Lower leg skin (tissue), 4 donors: ENCODE measurements at regions of chr7 and their contacts with region 1.

Region 1: DNA sequence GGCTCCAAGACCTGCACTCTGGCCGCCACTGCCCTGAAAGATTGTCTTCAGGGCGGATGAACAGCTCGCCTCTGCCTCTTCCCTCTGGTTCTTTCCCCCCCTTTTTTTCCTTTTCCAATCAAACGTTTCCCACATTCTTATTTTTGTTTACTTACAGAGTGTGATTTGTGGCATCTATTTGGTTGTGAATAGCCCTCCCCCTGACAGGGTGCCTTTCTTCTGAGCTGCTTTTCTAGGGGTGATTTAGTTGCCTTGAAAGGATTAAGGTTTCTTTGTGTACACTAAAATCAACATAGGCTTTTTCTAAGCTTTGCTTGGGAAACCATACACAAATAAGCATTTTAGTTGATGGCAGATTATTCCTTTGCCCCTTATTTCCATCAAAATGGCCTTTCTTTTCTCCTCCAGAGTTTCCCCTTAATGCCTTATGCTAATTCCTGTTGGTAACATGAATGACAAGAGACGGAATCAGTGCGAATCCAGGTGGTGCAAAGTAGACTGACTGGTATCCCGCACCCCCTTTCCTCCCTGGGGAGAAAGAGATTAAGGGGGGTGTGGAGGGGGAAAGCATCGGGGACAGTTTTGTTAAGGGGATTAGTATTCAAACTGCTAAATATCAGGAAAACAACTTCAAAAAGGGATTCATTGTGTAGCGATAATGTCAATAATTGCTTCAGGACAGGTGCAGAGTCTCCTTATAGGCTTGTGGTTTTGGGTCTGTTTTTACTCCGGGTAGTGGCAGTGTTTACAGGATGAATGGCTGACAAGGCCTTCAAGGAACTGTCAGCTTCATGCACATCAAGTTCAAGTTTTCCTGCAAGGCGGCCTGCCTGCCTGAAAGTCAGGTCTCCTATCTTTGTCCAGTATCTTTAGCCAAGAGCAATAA is 431.6 kb upstream of the GALNT17 start:
- DNase-seq: no peak
- H3K4me3 ChIP-seq: no peak overlapping the region
- CTCF ChIP-seq: no peak
- POLR2A ChIP-seq: no peak

Region 2: GRCh38 chr7:69800495-69800894 is 899.8 kb before region 1 on chr7:
- intact Hi-C with region 1: no loop called
- DNase-seq: no peak
- H3K4me3 ChIP-seq: no peak overlapping the region
- CTCF ChIP-seq: no peak
- POLR2A ChIP-seq: no peak

Region 3: DNA sequence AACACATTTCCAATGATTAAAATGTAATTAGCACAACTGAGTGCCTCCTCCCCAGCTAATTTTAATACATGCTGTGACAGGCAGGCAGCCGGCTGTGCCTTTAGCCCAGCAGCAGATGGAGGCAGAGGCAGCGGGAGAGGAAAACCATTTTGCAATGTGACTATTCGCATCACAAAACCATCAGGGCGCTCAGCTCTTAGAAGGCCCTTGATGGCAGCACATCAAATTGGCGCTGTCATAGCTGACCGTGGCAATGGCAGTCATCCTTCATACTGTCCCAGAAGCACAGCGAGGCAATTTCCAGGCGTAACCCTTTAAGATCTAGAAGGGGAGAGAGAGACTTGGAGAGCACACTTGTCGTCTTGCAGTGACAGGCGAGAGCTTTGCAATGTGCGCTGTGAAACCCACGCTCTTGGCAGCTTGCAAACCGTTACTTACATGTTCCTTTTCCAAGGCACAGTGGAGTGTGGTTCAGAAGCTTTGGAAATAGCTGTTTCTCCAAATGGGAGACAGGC is 283.1 kb before region 1 on chr7:
- intact Hi-C with region 1: loop called (anchors 5 kb)
- DNase-seq: peak in 1 of 2 donors; percentile 31
- H3K4me3 ChIP-seq: no peak overlapping the region
- CTCF ChIP-seq: no peak
- POLR2A ChIP-seq: no peak